ENCODE measurements at regions of chr7 and their contacts with region 1.

Region 1: DNA sequence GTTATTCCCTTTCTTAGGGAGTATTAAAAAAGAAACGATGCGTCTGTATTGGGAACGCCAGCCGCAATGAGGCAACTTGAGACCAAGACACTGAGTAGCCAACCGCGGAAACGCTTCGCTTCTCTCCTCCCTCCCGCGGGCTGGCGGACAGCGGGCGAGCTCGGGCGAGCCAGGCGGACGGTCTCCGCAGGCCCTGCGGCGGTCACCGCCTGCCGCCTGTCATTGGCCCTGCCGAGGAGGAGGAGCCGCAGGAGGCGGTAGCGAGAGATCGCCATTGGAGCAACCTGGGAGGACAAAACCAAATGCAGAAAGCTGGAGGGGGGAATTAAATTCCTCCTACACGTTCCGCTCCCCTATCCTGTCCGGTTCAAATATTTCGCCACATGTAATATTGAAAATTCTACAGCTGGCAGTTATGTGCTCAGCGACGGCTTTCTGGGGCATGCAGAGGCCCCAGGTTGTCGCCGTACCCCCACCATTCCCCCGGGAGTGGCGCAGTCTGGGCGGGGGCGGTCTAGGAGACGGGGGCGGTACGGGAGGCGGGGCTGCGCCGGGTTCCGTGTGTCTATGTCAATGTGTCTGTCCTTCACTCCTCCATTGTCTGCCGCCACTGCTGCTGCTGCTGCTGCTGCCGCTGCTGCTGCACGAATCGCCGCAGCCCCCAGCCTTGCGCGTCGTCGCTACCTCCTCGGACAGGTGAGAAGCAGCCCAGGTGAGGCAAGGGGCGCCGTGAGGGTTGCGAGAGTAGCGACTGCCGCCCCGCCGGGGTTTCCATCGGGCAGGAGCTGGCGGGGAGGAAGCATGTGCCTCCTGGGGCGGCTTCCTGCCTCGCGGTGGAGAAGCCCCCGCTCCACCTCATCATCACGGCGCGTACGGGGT is at the starts of genes ANKMY2 and BZW2:
- DNase-seq: peak; percentile 86
- ATAC-seq: peak; percentile 86
- H3K4me3 Mint-ChIP-seq: peak within 1 kb of the TSS; percentile 99
- H3K27ac Mint-ChIP-seq: peak within 1 kb of the TSS; percentile 99
- H3K4me1 Mint-ChIP-seq: peaks cover 56% of the 10 kb centered on the region
- H3K27me3 Mint-ChIP-seq: no peaks in the 10 kb centered on the region
- CTCF ChIP-seq: no peak
- total RNA-seq, gene ANKMY2: 9.4 and 11.3 TPM in 2 replicates
- total RNA-seq, gene BZW2: 47.2 and 48.2 TPM in 2 replicates

Region 2: DNA sequence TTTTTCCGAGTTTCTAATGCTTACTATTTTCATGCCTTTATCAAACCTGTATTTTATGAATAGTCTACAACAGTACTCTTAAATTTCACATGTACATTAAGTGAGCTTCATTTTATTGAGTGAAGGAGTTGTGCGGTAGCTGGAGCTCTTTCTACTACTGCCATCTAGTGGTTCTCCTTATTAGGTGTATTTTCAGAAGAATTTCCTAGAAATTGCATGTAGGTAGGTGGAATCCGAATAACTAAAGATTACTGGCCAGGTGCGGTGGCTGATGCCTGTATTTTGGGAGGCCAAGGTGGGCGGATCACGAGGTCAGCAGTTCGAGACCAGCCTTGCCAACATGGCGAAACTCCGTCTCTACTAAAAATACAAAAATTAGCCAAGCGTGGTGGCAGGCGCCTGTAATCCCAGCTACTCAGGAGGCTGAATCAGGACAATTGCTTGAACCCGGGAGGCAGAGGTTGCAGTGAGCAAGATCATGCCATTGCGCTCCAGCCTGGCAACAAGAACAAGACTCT is 80.9 kb before region 1 on chr7:
- CTCF ChIA-PET with region 1: interaction called, 4 read pairs
- POLR2A ChIA-PET with region 1: interaction called, 5 read pairs
- intact Hi-C with region 1: loop called (anchors 5 kb)
- DNase-seq: no peak
- ATAC-seq: peak; percentile 53
- H3K4me3 Mint-ChIP-seq: no peak overlapping the region
- H3K27ac Mint-ChIP-seq: no peak overlapping the region
- H3K4me1 Mint-ChIP-seq: peaks cover 23% of the 10 kb centered on the region
- H3K27me3 Mint-ChIP-seq: no peaks in the 10 kb centered on the region
- CTCF ChIP-seq: peak; percentile 64

Region 3: DNA sequence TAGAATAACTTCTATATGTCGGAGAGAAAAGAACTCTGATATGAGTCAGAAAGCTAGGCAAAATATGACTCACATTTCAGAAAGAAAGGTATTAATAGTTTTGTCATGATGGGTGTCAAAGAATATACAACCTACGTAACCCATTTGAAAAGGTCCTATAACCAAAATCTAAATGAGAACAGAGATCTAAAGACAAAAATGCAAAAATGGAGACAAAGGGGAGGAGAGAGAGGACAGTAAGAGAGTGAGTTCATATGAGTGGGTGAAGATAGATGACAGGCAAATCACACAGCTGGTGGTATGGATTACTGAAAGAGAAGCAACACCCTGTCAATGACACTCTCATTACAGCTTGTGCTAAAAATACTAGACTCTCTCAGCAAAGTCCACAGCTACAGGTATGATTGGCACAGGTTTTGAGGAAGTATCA is 25.8 kb before region 1 on chr7:
- CTCF ChIA-PET with region 1: no interaction called
- POLR2A ChIA-PET with region 1: interaction called, 11 read pairs
- intact Hi-C with region 1: loop called (anchors 1 kb)
- DNase-seq: no peak
- ATAC-seq: peak; percentile 89
- H3K4me3 Mint-ChIP-seq: no peak overlapping the region
- H3K27ac Mint-ChIP-seq: peak overlapping the region; percentile 68
- H3K4me1 Mint-ChIP-seq: peaks cover 10% of the 10 kb centered on the region
- H3K27me3 Mint-ChIP-seq: no peaks in the 10 kb centered on the region
- CTCF ChIP-seq: no peak

Region 4: DNA sequence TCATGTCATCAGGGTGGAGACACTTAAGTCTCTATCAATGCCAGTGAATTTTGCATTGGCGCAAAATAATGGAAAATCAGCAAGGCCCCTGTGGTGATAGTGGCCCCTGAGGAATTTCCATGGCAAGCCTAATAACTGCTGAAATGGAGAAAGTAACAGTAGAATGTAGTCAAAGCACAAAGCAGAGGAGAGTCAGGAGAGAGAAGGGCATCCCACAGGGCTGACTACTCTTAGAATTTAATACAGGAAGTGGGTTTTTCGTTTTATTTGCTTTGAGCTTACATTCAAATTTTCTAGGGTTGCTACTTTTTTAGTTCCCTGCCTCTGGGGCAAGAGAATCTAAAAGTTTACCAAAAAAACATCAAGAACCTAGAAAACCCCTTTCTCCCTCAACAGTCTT is 39.1 kb after region 1 on chr7:
- CTCF ChIA-PET with region 1: no interaction called
- POLR2A ChIA-PET with region 1: interaction called, 11 read pairs
- intact Hi-C with region 1: loop called (anchors 1 kb)
- DNase-seq: no peak
- ATAC-seq: peak; percentile 34
- H3K4me3 Mint-ChIP-seq: peak overlapping the region; percentile 45
- H3K27ac Mint-ChIP-seq: peak overlapping the region; percentile 14
- H3K4me1 Mint-ChIP-seq: peaks cover 22% of the 10 kb centered on the region
- H3K27me3 Mint-ChIP-seq: no peaks in the 10 kb centered on the region
- CTCF ChIP-seq: no peak

Region 5: DNA sequence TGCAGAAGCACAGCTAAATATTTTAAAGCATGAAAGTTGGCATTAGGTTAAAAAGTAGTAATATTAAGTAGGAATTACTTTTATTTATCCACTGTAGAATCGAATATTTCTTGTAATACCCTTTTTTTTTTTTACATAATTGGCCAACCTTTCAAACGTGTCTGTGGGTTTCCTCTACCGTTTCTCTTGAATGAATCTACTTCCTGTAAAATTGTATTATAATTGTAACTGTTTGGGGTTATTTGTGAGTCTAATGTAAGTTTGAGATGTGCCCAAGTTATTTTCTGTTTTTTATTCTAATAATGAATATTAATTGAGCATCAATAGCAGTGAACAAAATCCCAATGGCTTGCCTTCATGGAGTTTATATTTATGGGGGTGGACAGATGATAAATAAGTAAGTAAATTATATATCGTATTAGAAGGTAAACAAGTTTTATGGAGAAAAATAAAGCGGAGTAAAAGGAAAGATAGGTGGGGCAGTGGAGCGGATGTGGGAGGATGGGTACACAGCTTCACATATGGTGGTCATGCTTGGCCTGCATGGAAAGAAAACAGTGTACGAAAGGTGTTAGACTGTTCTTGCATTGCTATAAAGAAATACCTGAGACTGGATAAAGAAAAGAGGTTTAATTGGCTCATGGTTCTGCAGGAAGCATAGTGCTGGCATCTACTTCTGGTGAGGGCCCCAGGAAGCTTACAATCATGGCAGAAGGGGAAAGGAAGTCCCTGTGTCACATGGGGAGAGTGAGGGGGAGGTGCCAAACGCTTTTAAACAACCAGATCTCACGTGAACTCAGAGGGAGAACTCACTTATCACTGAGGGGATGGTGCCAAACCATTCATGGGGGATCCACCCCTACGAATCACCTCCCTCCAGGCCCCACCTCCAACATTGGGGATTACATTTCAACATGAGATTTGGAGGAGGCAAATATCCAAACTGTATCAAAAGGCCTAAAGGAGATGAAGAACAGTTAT is 113.1 kb after region 1 on chr7:
- CTCF ChIA-PET with region 1: interaction called, 3 read pairs
- POLR2A ChIA-PET with region 1: interaction called, 19 read pairs
- intact Hi-C with region 1: no loop called
- DNase-seq: no peak
- ATAC-seq: peak; percentile 40
- H3K4me3 Mint-ChIP-seq: peak overlapping the region; percentile 75
- H3K27ac Mint-ChIP-seq: peak overlapping the region; percentile 92
- H3K4me1 Mint-ChIP-seq: peaks cover 93% of the 10 kb centered on the region
- H3K27me3 Mint-ChIP-seq: no peaks in the 10 kb centered on the region
- CTCF ChIP-seq: no peak

Region 6: GRCh38 chr7:17940302-17940883 is 1294.6 kb after region 1 on chr7 and contains the start of gene SNX13:
- CTCF ChIA-PET with region 1: no interaction called
- POLR2A ChIA-PET with region 1: no interaction called
- intact Hi-C with region 1: loop called (anchors 1 kb)
- DNase-seq: peak; percentile 84
- ATAC-seq: peak; percentile 91
- H3K4me3 Mint-ChIP-seq: peak within 1 kb of the TSS; percentile 98
- H3K27ac Mint-ChIP-seq: peak within 1 kb of the TSS; percentile 98
- H3K4me1 Mint-ChIP-seq: peaks cover 44% of the 10 kb centered on the region
- H3K27me3 Mint-ChIP-seq: no peaks in the 10 kb centered on the region
- CTCF ChIP-seq: no peak
- total RNA-seq, gene SNX13: 40.0 and 46.5 TPM in 2 replicates